ENCODE measurements at regions of chr15 and their contacts with region 1.

Region 1: GRCh38 chr15:40098489-40099261 is 10.0 kb downstream of the BMF start:
- DNase-seq: peak; percentile 85
- ATAC-seq: peak; percentile 97
- H3K4me3 Mint-ChIP-seq: peak overlapping the region; percentile 57
- H3K27ac Mint-ChIP-seq: peak overlapping the region; percentile 92
- H3K4me1 Mint-ChIP-seq: peaks cover 90% of the 10 kb centered on the region
- H3K27me3 Mint-ChIP-seq: no peaks in the 10 kb centered on the region

Region 2: GRCh38 chr15:40044717-40045571 is 53.7 kb before region 1 on chr15:
- CTCF ChIA-PET with region 1: interaction called, 366 read pairs
- POLR2A ChIA-PET with region 1: interaction called, 12 read pairs
- DNase-seq: peak; percentile 88
- ATAC-seq: peak; percentile 92
- H3K4me3 Mint-ChIP-seq: peak overlapping the region; percentile 9
- H3K27ac Mint-ChIP-seq: peak overlapping the region; percentile 53
- H3K4me1 Mint-ChIP-seq: peaks cover 76% of the 10 kb centered on the region
- H3K27me3 Mint-ChIP-seq: no peaks in the 10 kb centered on the region

Region 3: GRCh38 chr15:40054605-40055545 is 43.8 kb before region 1 on chr15:
- CTCF ChIA-PET with region 1: interaction called, 366 read pairs
- POLR2A ChIA-PET with region 1: interaction called, 3 read pairs
- DNase-seq: peak; percentile 61
- ATAC-seq: peak; percentile 66
- H3K4me3 Mint-ChIP-seq: peak overlapping the region; percentile 32
- H3K27ac Mint-ChIP-seq: peak overlapping the region; percentile 79
- H3K4me1 Mint-ChIP-seq: peaks cover 78% of the 10 kb centered on the region
- H3K27me3 Mint-ChIP-seq: no peaks in the 10 kb centered on the region

Region 4: GRCh38 chr15:40130799-40131502 is 32.3 kb after region 1 on chr15:
- CTCF ChIA-PET with region 1: no interaction called
- POLR2A ChIA-PET with region 1: no interaction called
- DNase-seq: no peak
- ATAC-seq: no peak
- H3K4me3 Mint-ChIP-seq: no peak overlapping the region
- H3K27ac Mint-ChIP-seq: no peak overlapping the region
- H3K4me1 Mint-ChIP-seq: no peaks in the 10 kb centered on the region
- H3K27me3 Mint-ChIP-seq: no peaks in the 10 kb centered on the region

Region 5: GRCh38 chr15:40160689-40161688 is 62.3 kb after region 1 on chr15 and contains the start of gene BUB1B:
- CTCF ChIA-PET with region 1: interaction called, 26 read pairs
- POLR2A ChIA-PET with region 1: interaction called, 13 read pairs
- DNase-seq: peak; percentile 97
- ATAC-seq: peak; percentile 95
- H3K4me3 Mint-ChIP-seq: no peak within 1 kb of the TSS
- H3K27ac Mint-ChIP-seq: no peak within 1 kb of the TSS
- H3K4me1 Mint-ChIP-seq: peaks cover 10% of the 10 kb centered on the region
- H3K27me3 Mint-ChIP-seq: no peaks in the 10 kb centered on the region
- total RNA-seq, gene BUB1B: 91.9 to 94.9 TPM

Region 6: DNA sequence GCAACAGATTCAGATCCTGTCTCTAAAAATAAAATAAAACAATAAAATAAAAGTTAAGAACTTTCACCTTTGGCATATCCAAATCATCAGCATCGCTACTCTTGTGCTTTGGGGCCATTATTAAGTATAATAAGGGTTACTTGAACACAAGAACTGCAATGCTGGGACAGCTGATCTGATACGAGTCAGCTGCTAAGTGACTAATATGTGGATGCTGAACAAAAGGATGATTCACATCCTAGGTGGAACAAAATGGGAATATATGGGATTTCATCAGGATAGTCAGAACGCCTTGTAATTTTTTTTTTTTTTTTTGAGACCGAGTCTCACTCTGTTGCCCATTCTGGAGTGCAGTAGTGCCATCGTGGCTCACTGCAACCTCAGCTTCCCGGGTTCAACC is 91.9 kb after region 1 on chr15:
- CTCF ChIA-PET with region 1: no interaction called
- POLR2A ChIA-PET with region 1: no interaction called
- DNase-seq: no peak
- ATAC-seq: no peak
- H3K4me3 Mint-ChIP-seq: no peak overlapping the region
- H3K27ac Mint-ChIP-seq: no peak overlapping the region
- H3K4me1 Mint-ChIP-seq: peaks cover under 1% of the 10 kb centered on the region
- H3K27me3 Mint-ChIP-seq: no peaks in the 10 kb centered on the region

Measured in activated CD8-positive, alpha-beta T cell treated with anti-CD3 and anti-CD28 coated beads, Interleukin-2, amount 10 ng/mL, durations not matched to agents 7 days and 5 days (primary cell).